ENCODE measurements at regions of chr1 and their contacts with region 1.

Region 1: GRCh38 chr1:89762779-89763648 is 57.8 kb upstream of the LRRC8D start:
- DNase-seq: peak; percentile 84 to 91
- ATAC-seq: peak; percentile 98 to 100 (median 98)
- H3K4me3 ChIP-seq: peak overlapping the region; percentile 63
- H3K27ac ChIP-seq: peak overlapping the region; percentile 18
- H3K4me1 ChIP-seq: no peaks in the 10 kb centered on the region
- H3K27me3 ChIP-seq: no peaks in the 10 kb centered on the region
- CTCF ChIP-seq: peak; percentile 98

Region 2: GRCh38 chr1:89603651-89604413 is 159.2 kb before region 1 on chr1:
- intact Hi-C with region 1: loop called in 1 of 2 experiments (anchors 5 kb)
- DNase-seq: no peak
- ATAC-seq: peak; percentile 35 to 50 (median 40)
- H3K4me3 ChIP-seq: no peak overlapping the region
- H3K27ac ChIP-seq: no peak overlapping the region
- H3K4me1 ChIP-seq: peaks cover 4% of the 10 kb centered on the region
- H3K27me3 ChIP-seq: no peaks in the 10 kb centered on the region
- CTCF ChIP-seq: no peak

Region 3: DNA sequence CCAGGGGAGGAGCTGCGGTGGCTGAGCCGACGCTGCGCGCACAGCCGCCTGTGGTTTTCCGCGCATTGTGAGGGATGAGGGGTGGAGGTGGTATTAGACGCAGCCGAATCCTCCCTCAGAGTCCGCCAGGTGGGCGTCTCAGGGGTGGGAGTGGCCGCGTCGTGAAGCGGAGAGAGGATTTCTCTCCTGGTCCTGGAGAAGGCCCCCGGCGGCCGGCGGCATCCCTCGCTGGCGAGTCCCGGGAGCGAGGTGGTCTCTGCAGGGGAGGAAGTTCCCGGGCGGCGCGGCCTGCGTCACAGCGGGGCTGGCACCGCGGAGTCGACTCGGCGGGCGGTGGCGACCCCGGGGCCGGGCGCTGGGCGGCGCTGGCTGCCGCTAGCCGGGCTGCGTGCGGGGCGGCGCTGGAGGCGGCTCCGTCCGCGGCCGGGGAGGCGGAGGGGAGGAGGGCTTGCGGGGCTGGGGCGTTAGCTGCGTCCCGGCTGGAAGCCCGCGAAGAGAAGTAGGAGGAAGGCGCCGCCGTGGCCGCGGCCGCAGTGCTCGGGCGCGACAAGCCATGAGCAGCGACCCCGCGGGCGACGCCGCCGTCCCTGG is 130.3 kb before region 1 on chr1 and contains the start of gene LRRC8C:
- intact Hi-C with region 1: loop called (anchors 1 to 2 kb)
- DNase-seq: peak; percentile 86 to 89
- ATAC-seq: peak; percentile 89 to 96 (median 94)
- H3K4me3 ChIP-seq: peak within 1 kb of the TSS; percentile 81
- H3K27ac ChIP-seq: peak within 1 kb of the TSS; percentile 75
- H3K4me1 ChIP-seq: no peaks in the 10 kb centered on the region
- H3K27me3 ChIP-seq: peaks cover 0 to 7% (median 0%) of the 10 kb centered on the region in 3 donors
- CTCF ChIP-seq: peak; percentile 55
- total RNA-seq, gene LRRC8C: 2.8 to 4.1 (median 3.2) TPM